GM23248 (cell line): ENCODE measurements at regions of chr2 and their contacts with region 1.

Region 1: DNA sequence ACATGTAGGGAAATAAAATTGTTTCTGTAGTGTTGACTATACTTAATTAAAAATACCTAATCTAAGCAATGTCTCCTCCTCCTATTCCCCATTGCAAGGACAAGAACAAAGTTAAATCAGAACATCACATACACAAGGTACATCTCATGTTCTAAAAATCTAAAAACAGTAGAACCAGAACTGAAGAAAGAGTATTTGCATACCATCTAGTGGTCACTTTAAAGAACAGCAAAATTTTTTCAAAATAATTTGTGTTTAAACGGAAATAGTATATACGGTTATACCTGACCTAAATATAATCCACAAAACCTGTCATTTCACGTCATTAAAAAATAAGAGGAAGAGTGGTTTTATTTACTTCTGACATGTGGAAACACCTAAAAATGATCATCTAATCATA is 294.3 kb upstream of the KCNH7 start:
- DNase-seq: peak; percentile 40
- H3K4me3 ChIP-seq: no peak overlapping the region
- H3K27ac ChIP-seq: no peak overlapping the region
- H3K4me1 ChIP-seq: no peaks in the 10 kb centered on the region
- H3K27me3 ChIP-seq: no peaks in the 10 kb centered on the region

Region 2: DNA sequence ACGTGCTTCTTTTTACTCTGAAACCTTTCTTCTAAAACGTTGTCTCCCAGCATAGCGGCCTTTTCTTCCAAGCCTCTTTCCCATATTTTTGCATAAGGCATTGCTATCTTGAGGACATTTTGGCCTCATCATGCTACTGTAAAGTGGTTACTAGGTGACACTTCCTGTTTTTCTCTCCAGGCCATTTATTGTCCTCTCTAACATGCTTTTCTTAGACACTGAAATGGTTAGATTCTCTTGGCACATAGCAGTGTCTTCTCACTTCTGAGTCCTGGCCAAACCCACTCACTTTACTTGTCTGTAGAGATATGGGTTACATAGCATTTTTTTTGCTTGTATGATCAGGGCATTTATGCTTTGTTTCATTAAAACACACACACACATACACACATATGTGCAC is 244.2 kb before region 1 on chr2:
- in situ Hi-C with region 1: loop called (anchors 10 kb)
- DNase-seq: peak; percentile 18
- H3K4me3 ChIP-seq: no peak overlapping the region
- H3K27ac ChIP-seq: no peak overlapping the region
- H3K4me1 ChIP-seq: no peaks in the 10 kb centered on the region
- H3K27me3 ChIP-seq: no peaks in the 10 kb centered on the region